ENCODE measurements at regions of chr5 and their contacts with region 1.

Region 1: DNA sequence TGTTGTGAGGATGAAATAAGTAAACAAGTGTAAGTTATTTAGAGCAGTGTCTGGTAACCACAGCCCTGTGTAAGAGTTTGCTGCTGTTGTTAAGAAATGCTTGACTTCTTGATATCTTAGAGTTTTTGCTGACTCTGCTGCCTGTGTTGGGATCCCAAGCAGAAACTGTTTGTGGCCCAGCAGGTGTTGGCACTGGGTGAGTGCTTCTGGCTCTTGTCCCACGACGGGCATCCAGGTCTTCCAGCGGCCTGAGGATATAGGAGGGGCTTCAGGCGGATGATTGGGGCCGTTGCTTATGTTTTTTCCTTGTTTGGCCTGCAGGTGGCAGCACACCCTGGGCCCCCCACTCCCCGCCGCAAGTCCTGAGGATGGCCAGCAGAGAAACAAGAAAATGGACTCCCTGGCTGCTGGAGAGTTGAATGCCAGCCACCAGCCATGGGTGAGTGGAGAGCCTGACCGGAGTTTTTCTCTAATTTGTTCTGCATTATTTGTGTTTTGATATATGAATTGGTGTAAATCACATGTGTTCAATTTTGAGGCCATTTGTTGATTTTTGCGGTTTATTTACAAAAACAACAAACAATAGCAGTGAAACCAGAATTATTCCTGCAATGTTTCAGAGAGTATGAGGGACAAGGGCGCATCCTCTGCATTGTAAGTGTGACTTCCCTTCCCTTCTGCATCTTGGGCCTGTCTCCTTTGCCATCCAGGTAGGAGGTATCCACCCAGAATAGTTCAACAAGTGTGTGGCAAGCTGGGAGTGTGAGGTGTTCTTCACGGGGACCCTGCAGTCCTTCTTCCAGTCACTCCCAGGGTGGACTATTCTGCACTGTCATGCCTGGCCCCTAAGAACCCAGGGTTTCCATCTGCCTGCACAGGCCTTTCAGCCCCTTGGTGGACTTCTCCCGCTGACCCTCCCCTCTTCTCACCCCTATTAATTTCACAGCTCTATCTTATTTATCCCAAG is 50.3 kb downstream of the SLC22A5 start:
- DNase-seq: peak; percentile 42 to 72 (median 55)
- ATAC-seq: peak; percentile 84
- H3K4me3 ChIP-seq: peak overlapping the region; percentile 12
- H3K4me3 Mint-ChIP-seq: peak overlapping the region; percentile 54 to 88 (median 76)
- H3K27ac ChIP-seq: peak overlapping the region; percentile 77
- H3K27ac Mint-ChIP-seq: peak overlapping the region; percentile 79 to 99 (median 97)
- H3K4me1 ChIP-seq: peaks cover 71 to 92% of the 10 kb centered on the region in 2 donors
- H3K4me1 Mint-ChIP-seq: peaks cover 77 to 98% (median 95%) of the 10 kb centered on the region in 7 donors
- H3K27me3 ChIP-seq: no peaks in the 10 kb centered on the region
- H3K27me3 Mint-ChIP-seq: no peaks in the 10 kb centered on the region

Region 2: GRCh38 chr5:132019857-132020555 is 399.8 kb before region 1 on chr5:
- CTCF ChIA-PET with region 1: no interaction called
- POLR2A ChIA-PET with region 1: no interaction called
- intact Hi-C with region 1: no loop called
- DNase-seq: peak in 8 of 9 donors; percentile 37 to 75 (median 57)
- ATAC-seq: peak; percentile 95
- H3K4me3 ChIP-seq: no peak overlapping the region
- H3K4me3 Mint-ChIP-seq: peak overlapping the region in 7 of 10 donors; percentile 35 to 81 (median 53)
- H3K27ac ChIP-seq: peak overlapping the region; percentile 46
- H3K27ac Mint-ChIP-seq: peak overlapping the region; percentile 38 to 95 (median 69)
- H3K4me1 ChIP-seq: peaks cover 19 to 24% of the 10 kb centered on the region in 2 donors
- H3K4me1 Mint-ChIP-seq: peaks cover 10 to 54% (median 43%) of the 10 kb centered on the region in 7 donors
- H3K27me3 ChIP-seq: no peaks in the 10 kb centered on the region
- H3K27me3 Mint-ChIP-seq: peaks cover 0 to 45% (median 0%) of the 10 kb centered on the region in 5 donors

Region 3: DNA sequence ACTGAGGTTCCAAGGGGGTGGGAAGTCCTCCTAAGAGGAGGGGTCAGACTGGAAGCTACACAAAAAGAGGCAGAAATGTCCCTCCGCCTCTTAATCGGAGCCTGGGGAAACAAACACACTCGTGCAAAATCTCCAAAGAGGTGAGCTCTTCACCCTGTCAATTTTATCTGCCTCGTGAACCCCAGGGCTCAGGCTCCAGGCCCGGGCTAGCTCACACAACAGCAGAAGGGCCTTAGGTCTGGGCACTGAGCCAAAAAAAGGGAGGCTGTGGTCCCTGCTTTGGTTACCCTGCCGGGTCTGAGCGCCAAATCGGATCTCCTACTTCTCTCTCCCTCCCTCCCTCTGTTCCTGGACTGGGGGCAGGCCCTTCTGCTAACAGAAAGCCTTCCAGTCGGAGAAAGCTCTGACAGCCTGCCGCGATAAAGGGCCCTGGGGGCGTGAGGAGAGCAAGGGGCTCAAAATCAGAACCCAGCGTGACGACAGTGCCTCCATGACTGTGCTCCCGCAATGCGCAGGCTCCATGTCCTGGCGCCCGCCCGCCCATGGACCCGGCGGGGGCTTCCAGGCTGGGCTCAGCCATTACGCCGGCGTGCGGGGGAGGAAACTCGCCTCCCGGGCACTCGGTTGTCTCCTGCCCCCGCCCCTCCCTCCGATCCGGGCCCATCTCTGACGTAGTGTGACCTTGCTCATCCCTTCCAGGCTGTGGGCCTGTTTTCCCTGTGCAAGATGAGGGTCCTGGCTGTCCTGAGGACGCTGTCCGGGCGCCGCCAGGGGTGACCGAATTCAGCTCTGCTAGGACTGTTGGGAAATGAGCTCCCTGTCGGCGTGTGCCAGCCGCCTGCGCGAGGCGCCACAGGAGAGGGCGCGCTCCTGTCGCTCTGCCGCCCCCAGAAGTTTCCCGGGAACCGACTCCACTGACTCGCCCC is 126.5 kb before region 1 on chr5:
- CTCF ChIA-PET with region 1: no interaction called
- POLR2A ChIA-PET with region 1: no interaction called
- intact Hi-C with region 1: no loop called
- DNase-seq: peak; percentile 8 to 79 (median 35)
- ATAC-seq: peak; percentile 54
- H3K4me3 ChIP-seq: peak overlapping the region; percentile 69
- H3K4me3 Mint-ChIP-seq: peak overlapping the region; percentile 80 to 95 (median 90)
- H3K27ac ChIP-seq: peak overlapping the region; percentile 43
- H3K27ac Mint-ChIP-seq: peak overlapping the region in 3 of 9 donors; percentile 36 to 75 (median 43)
- H3K4me1 ChIP-seq: peaks cover 0 to 8% of the 10 kb centered on the region in 2 donors
- H3K4me1 Mint-ChIP-seq: peaks cover 5 to 26% (median 9%) of the 10 kb centered on the region in 7 donors
- H3K27me3 ChIP-seq: no peaks in the 10 kb centered on the region
- H3K27me3 Mint-ChIP-seq: peaks cover 9 to 32% (median 19%) of the 10 kb centered on the region in 5 donors

Region 4: GRCh38 chr5:132437604-132438266 is 17.9 kb after region 1 on chr5:
- CTCF ChIA-PET with region 1: interaction called, 8 read pairs
- POLR2A ChIA-PET with region 1: interaction called, 88 read pairs
- intact Hi-C with region 1: loop called in 1 of 2 experiments (anchors 1 kb)
- DNase-seq: peak in 8 of 9 donors; percentile 36 to 66 (median 56)
- ATAC-seq: peak; percentile 88
- H3K4me3 ChIP-seq: peak overlapping the region; percentile 25
- H3K4me3 Mint-ChIP-seq: peak overlapping the region; percentile 60 to 79 (median 68)
- H3K27ac ChIP-seq: peak overlapping the region; percentile 67
- H3K27ac Mint-ChIP-seq: peak overlapping the region; percentile 79 to 93 (median 85)
- H3K4me1 ChIP-seq: peaks cover 61 to 86% of the 10 kb centered on the region in 2 donors
- H3K4me1 Mint-ChIP-seq: peaks cover 68 to 96% (median 83%) of the 10 kb centered on the region in 7 donors
- H3K27me3 ChIP-seq: no peaks in the 10 kb centered on the region
- H3K27me3 Mint-ChIP-seq: no peaks in the 10 kb centered on the region

Region 5: GRCh38 chr5:132456296-132457001 is 36.7 kb after region 1 on chr5:
- CTCF ChIA-PET with region 1: interaction called, 11 read pairs
- POLR2A ChIA-PET with region 1: interaction called, 182 read pairs
- intact Hi-C with region 1: no loop called
- DNase-seq: peak in 8 of 9 donors; percentile 55 to 80 (median 70)
- ATAC-seq: peak; percentile 84
- H3K4me3 ChIP-seq: peak overlapping the region; percentile 40
- H3K4me3 Mint-ChIP-seq: peak overlapping the region; percentile 60 to 85 (median 78)
- H3K27ac ChIP-seq: peak overlapping the region; percentile 77
- H3K27ac Mint-ChIP-seq: peak overlapping the region; percentile 93 to 100 (median 99)
- H3K4me1 ChIP-seq: peaks cover 89 to 96% of the 10 kb centered on the region in 2 donors
- H3K4me1 Mint-ChIP-seq: peaks cover 81 to 94% (median 91%) of the 10 kb centered on the region in 7 donors
- H3K27me3 ChIP-seq: no peaks in the 10 kb centered on the region
- H3K27me3 Mint-ChIP-seq: no peaks in the 10 kb centered on the region

Region 6: DNA sequence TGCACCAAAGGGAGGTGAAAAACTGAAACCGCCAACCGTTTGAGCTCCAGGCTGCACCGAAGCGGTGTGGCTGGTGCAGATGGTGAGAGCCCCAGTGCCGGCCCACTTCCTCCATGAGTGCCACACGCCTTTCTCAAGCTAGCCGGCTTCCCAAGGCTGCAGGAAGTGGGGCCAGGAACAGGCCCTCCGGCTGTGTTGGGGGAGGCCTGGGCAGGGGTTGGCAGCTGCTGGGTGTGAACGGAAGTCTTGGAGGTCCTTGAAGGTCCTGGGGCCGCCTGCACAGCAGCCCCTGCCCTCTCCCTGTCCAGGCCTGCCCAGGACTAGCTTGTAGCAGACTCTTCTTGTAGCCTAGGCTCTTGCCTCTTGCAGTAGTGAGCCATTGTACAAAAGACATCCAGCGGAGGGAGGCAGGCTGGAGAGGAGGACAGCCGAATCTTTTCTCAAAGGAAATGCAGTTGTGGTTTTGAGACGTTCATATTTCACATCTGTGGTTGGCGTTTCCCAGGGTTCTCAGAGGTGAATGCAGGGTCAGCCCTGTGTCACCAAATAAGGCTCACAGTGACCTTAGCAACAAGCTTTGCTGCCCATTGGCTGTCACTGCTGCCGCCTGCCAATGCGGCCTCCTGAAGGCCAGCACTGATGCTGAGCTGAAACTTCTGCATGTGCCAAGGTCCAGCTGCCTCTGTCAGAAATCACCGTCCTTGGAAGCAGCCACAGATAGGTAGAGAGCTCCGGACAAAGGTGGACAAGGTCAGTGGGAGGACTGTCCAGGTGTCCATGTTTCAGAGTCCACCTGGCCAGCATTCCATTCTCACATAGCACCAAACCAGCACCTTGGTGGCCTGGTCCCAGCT is 46.9 kb after region 1 on chr5:
- CTCF ChIA-PET with region 1: interaction called, 25 read pairs
- POLR2A ChIA-PET with region 1: interaction called, 150 read pairs
- intact Hi-C with region 1: loop called in 1 of 2 experiments (anchors 1 kb)
- DNase-seq: peak in 8 of 9 donors; percentile 58 to 76 (median 72)
- ATAC-seq: peak; percentile 81
- H3K4me3 ChIP-seq: peak overlapping the region; percentile 57
- H3K4me3 Mint-ChIP-seq: peak overlapping the region; percentile 72 to 87 (median 78)
- H3K27ac ChIP-seq: peak overlapping the region; percentile 69
- H3K27ac Mint-ChIP-seq: peak overlapping the region; percentile 83 to 95 (median 94)
- H3K4me1 ChIP-seq: peaks cover 71 to 93% of the 10 kb centered on the region in 2 donors
- H3K4me1 Mint-ChIP-seq: peaks cover 58 to 98% (median 97%) of the 10 kb centered on the region in 7 donors
- H3K27me3 ChIP-seq: no peaks in the 10 kb centered on the region
- H3K27me3 Mint-ChIP-seq: no peaks in the 10 kb centered on the region

Region 7: DNA sequence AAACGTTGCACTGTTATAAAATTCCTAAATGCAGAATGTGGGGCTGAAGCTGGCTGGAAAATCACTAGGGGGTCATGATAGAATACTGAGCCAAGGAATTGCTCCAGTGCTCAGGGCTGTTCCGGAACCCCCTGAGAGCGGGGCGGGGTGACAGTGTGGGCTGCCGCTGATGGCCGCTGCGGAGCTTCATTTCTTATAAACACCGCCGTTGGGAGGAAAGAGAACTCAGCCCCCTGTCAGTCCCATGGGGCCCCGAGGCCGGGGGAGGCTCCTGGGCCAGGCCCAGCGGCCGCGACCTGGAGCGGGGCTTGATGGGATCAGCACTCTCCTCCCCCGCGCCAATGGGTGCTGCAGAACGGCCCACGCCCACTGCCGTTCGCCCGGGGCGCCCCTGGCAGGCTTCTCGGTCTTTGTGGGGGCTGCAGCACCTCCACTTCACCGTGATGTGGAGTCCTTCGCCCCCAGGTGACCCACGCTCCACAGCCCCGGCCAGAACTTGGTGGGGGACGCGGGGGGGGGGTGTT is 75.9 kb after region 1 on chr5:
- CTCF ChIA-PET with region 1: interaction called, 32 read pairs
- POLR2A ChIA-PET with region 1: interaction called, 132 read pairs
- intact Hi-C with region 1: loop called (anchors 1 to 2 kb)
- DNase-seq: peak in 7 of 9 donors; percentile 42 to 79 (median 54)
- ATAC-seq: peak; percentile 48
- H3K4me3 ChIP-seq: peak overlapping the region; percentile 91
- H3K4me3 Mint-ChIP-seq: peak overlapping the region; percentile 86 to 99 (median 97)
- H3K27ac ChIP-seq: peak overlapping the region; percentile 99
- H3K27ac Mint-ChIP-seq: peak overlapping the region; percentile 90 to 99 (median 97)
- H3K4me1 ChIP-seq: peaks cover 48 to 57% of the 10 kb centered on the region in 2 donors
- H3K4me1 Mint-ChIP-seq: peaks cover 36 to 79% (median 68%) of the 10 kb centered on the region in 7 donors
- H3K27me3 ChIP-seq: no peaks in the 10 kb centered on the region
- H3K27me3 Mint-ChIP-seq: no peaks in the 10 kb centered on the region

Region 8: DNA sequence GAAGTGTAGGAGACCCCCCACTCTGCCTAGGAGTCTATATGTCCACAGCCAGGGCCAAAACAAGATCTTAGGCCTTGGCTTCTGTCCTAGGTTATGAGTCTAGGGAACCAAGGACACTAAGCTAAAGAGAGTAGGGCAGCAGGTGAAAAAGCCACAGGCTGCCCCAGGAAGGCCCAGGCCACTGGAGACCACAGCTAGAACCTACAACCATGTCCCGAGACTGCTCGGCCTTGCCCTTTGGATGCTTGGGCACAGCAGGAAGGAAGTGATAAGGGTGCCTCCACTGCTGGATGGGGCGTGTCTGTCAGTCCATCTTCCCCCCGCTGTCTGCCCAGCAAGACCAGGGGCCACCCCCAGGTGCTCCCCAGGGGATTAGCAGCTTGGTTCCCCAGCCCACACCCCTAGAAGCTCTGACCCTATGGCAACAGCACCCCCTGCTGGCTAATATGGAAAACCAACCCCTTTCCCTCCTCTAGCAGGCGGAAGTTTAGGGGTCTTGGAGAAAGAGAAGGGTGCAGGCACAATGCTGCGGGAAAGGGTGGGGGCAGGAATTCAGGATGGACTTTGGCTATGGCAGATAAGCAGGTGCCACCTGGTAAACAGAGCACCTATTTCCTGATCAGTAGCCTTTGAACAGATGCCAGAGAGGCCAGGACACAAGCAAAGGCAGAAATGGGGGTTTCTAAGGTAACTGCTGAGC is 81.3 kb after region 1 on chr5:
- CTCF ChIA-PET with region 1: interaction called, 13 read pairs
- POLR2A ChIA-PET with region 1: interaction called, 53 read pairs
- intact Hi-C with region 1: loop called (anchors 1 kb)
- DNase-seq: peak; percentile 52 to 85 (median 76)
- ATAC-seq: peak; percentile 52
- H3K4me3 ChIP-seq: no peak overlapping the region
- H3K4me3 Mint-ChIP-seq: peak overlapping the region in 1 of 10 donors; percentile 48
- H3K27ac ChIP-seq: peak overlapping the region; percentile 99
- H3K27ac Mint-ChIP-seq: peak overlapping the region in 8 of 9 donors; percentile 26 to 98 (median 82)
- H3K4me1 ChIP-seq: peaks cover 12 to 21% of the 10 kb centered on the region in 2 donors
- H3K4me1 Mint-ChIP-seq: peaks cover 6 to 48% (median 31%) of the 10 kb centered on the region in 7 donors
- H3K27me3 ChIP-seq: no peaks in the 10 kb centered on the region
- H3K27me3 Mint-ChIP-seq: peaks cover 0 to 5% (median 0%) of the 10 kb centered on the region in 5 donors

Region 9: DNA sequence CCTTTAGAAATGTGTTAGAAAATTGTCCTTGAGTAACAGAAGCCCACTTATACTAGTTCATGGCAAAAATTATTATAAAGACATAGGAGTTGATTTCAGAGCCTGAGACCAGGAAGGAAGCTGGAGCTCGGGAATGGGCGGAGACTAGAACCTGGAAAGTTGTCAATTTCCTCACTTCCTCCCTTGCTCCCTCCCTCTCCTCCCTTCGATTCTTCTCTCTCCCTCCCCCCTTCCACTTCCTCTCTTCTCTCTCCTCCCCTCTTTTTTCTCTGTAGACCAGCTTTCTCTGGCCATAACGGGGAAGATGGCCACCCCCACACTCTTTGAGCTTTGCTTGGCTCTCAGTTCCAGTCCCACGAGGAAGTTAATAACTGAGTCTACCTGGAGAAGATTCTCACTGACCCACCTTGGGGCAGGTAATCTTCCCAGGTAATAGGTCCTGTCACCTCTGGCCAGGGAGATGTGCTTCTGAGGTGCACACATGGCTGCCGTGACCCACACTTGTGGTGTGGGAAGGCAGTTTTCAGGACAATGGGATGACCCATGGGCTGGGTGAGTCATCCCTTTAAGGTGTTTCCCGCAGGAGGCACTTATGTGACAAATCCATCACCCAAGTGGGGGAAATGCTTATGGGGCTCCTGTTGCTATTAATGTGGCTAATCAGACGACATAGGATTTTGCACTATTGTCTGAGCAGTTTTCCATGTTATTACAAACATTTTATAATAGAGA is 710.8 kb after region 1 on chr5:
- CTCF ChIA-PET with region 1: no interaction called
- POLR2A ChIA-PET with region 1: no interaction called
- intact Hi-C with region 1: no loop called
- DNase-seq: no peak
- ATAC-seq: no peak
- H3K4me3 ChIP-seq: no peak overlapping the region
- H3K4me3 Mint-ChIP-seq: no peak overlapping the region
- H3K27ac ChIP-seq: no peak overlapping the region
- H3K27ac Mint-ChIP-seq: peak overlapping the region in 1 of 9 donors; percentile 82
- H3K4me1 ChIP-seq: no peaks in the 10 kb centered on the region
- H3K4me1 Mint-ChIP-seq: peaks cover 0 to 4% (median 0%) of the 10 kb centered on the region in 7 donors
- H3K27me3 ChIP-seq: no peaks in the 10 kb centered on the region
- H3K27me3 Mint-ChIP-seq: peaks cover 0 to 13% (median 0%) of the 10 kb centered on the region in 5 donors

Measured in naive thymus-derived CD4-positive, alpha-beta T cell (primary cell).